MCF 10A (cell line): ENCODE measurements at regions of chr15 and their contacts with region 1.

Region 1: GRCh38 chr15:48285329-48286214 is 45.7 kb upstream of the DUT start:
- DNase-seq: peak; percentile 77
- H3K4me3 Mint-ChIP-seq: peak overlapping the region; percentile 58
- H3K27ac Mint-ChIP-seq: peak overlapping the region; percentile 31
- H3K4me1 Mint-ChIP-seq: no peaks in the 10 kb centered on the region
- H3K27me3 Mint-ChIP-seq: no peaks in the 10 kb centered on the region
- CTCF ChIP-seq: peak; percentile 53

Region 2: DNA sequence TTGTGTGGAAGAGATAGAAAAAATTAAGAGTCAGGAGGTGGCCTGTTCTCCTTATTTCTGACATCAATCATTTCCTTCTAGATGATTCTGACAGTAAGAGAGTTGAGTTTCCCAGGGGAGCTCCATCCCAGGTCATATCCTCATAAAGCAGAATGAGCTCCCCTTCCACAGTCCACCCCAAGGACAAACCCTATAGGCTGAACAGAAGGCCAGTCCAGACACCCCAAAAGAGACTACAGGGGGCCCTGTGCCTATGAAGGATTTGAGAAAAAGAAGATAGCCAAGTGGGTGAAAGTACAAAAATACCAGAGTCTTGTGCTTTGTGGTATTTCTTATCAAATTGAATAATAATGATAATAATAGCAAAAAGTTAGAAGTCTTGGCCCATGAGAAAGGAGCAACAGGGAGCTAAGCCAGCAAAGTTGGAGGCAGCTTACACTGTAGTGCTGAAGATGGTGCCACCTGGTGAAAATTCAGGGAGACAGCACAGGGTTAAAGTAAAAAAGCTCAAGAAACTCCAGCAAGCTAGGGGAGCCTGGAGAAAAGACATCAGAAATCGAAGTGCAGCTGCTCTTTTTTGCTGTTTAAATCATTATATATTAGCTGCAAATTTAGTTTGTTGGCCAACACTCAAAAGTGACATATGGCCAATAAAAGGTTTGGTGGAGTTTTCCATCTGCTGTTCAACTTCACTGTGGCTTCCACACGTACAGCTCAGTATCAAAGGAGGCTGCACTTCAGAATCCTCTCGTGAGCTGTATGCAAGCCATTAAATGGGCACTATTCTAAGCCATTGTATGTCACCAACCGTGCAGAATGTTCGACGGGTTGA is 200.6 kb before region 1 on chr15:
- CTCF ChIA-PET with region 1: interaction called, 17 read pairs
- POLR2A ChIA-PET with region 1: no interaction called
- intact Hi-C with region 1: no loop called
- DNase-seq: peak; percentile 49
- H3K4me3 Mint-ChIP-seq: no peak overlapping the region
- H3K27ac Mint-ChIP-seq: no peak overlapping the region
- H3K4me1 Mint-ChIP-seq: peaks cover 12% of the 10 kb centered on the region
- H3K27me3 Mint-ChIP-seq: no peaks in the 10 kb centered on the region
- CTCF ChIP-seq: peak; percentile 47

Region 3: GRCh38 chr15:48250640-48251076 is 34.9 kb before region 1 on chr15:
- CTCF ChIA-PET with region 1: interaction called, 14 read pairs
- POLR2A ChIA-PET with region 1: interaction called, 3 read pairs
- intact Hi-C with region 1: no loop called
- DNase-seq: peak; percentile 62
- H3K4me3 Mint-ChIP-seq: no peak overlapping the region
- H3K27ac Mint-ChIP-seq: peak overlapping the region; percentile 28
- H3K4me1 Mint-ChIP-seq: peaks cover 10% of the 10 kb centered on the region
- H3K27me3 Mint-ChIP-seq: no peaks in the 10 kb centered on the region
- CTCF ChIP-seq: peak; percentile 50

Region 4: GRCh38 chr15:48297668-48298067 is 12.1 kb after region 1 on chr15:
- CTCF ChIA-PET with region 1: interaction called, 18 read pairs
- POLR2A ChIA-PET with region 1: interaction called, 3 read pairs
- intact Hi-C with region 1: no loop called
- DNase-seq: no peak
- H3K4me3 Mint-ChIP-seq: no peak overlapping the region
- H3K27ac Mint-ChIP-seq: no peak overlapping the region
- H3K4me1 Mint-ChIP-seq: no peaks in the 10 kb centered on the region
- H3K27me3 Mint-ChIP-seq: no peaks in the 10 kb centered on the region
- CTCF ChIP-seq: no peak